B cell (primary cell): ENCODE measurements at regions of chr19 and their contacts with region 1.

Region 1: DNA sequence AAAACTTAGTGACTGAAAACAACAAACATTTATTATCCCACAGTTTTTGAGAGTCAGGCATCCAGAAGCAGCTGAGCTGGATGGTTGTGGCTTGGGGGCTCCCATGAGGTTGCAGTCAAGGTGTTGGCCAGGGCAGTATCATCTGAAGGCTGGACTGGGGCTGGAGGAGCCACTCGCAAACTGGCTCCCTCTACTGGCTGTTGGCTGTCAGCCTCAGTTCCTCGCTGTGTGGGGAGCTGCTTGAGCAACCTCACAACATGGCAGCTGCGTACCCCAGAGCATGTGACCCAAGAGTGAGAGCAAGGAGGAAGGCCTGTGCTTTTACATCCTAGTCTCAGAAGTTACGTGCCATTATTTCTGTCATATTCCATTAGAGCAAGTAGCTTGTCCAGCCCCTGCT is 9.7 kb downstream of the YJU2 start:
- DNase-seq: no peak
- ATAC-seq: no peak
- H3K4me3 ChIP-seq: no peak overlapping the region
- H3K4me3 Mint-ChIP-seq: no peak overlapping the region
- H3K27ac ChIP-seq: no peak overlapping the region
- H3K27ac Mint-ChIP-seq: no peak overlapping the region
- H3K4me1 ChIP-seq: no peaks in the 10 kb centered on the region
- H3K4me1 Mint-ChIP-seq: peaks cover 2% of the 10 kb centered on the region
- H3K27me3 ChIP-seq: no peaks in the 10 kb centered on the region
- H3K27me3 Mint-ChIP-seq: no peaks in the 10 kb centered on the region
- CTCF ChIP-seq: peak; percentile 11

Region 2: GRCh38 chr19:2969104-2969504 is 1287.5 kb before region 1 on chr19:
- CTCF ChIA-PET with region 1: no interaction called
- POLR2A ChIA-PET with region 1: interaction called, 11 read pairs
- intact Hi-C with region 1: no loop called
- DNase-seq: peak; percentile 63
- ATAC-seq: peak; percentile 59
- H3K4me3 ChIP-seq: no peak overlapping the region
- H3K4me3 Mint-ChIP-seq: peak overlapping the region; percentile 50
- H3K27ac ChIP-seq: peak overlapping the region; percentile 57 to 67
- H3K27ac Mint-ChIP-seq: peak overlapping the region; percentile 68
- H3K4me1 ChIP-seq: peaks cover 36 to 44% of the 10 kb centered on the region in 2 donors
- H3K4me1 Mint-ChIP-seq: peaks cover 30% of the 10 kb centered on the region
- H3K27me3 ChIP-seq: peaks cover 0 to 4% (median under 1%) of the 10 kb centered on the region in 4 experiments
- H3K27me3 Mint-ChIP-seq: no peaks in the 10 kb centered on the region
- CTCF ChIP-seq: no peak

Region 3: GRCh38 chr19:4229179-4229931 is 27.2 kb before region 1 on chr19 and contains the start of gene EBI3:
- CTCF ChIA-PET with region 1: no interaction called
- POLR2A ChIA-PET with region 1: no interaction called
- intact Hi-C with region 1: no loop called
- DNase-seq: peak; percentile 84
- ATAC-seq: peak; percentile 92
- H3K4me3 ChIP-seq: peak within 1 kb of the TSS in 4 of 5 experiments; percentile 34 to 44 (median 37)
- H3K4me3 Mint-ChIP-seq: no peak within 1 kb of the TSS
- H3K27ac ChIP-seq: peak within 1 kb of the TSS; percentile 40 to 59
- H3K27ac Mint-ChIP-seq: no peak within 1 kb of the TSS
- H3K4me1 ChIP-seq: peaks cover 26 to 32% of the 10 kb centered on the region in 2 donors
- H3K4me1 Mint-ChIP-seq: peaks cover 5% of the 10 kb centered on the region
- H3K27me3 ChIP-seq: no peaks in the 10 kb centered on the region
- H3K27me3 Mint-ChIP-seq: no peaks in the 10 kb centered on the region
- CTCF ChIP-seq: no peak
- total RNA-seq, gene EBI3: 11.3 and 15.6 TPM in 2 replicates